ENCODE measurements at regions of chr17 and their contacts with region 1.

Region 1: DNA sequence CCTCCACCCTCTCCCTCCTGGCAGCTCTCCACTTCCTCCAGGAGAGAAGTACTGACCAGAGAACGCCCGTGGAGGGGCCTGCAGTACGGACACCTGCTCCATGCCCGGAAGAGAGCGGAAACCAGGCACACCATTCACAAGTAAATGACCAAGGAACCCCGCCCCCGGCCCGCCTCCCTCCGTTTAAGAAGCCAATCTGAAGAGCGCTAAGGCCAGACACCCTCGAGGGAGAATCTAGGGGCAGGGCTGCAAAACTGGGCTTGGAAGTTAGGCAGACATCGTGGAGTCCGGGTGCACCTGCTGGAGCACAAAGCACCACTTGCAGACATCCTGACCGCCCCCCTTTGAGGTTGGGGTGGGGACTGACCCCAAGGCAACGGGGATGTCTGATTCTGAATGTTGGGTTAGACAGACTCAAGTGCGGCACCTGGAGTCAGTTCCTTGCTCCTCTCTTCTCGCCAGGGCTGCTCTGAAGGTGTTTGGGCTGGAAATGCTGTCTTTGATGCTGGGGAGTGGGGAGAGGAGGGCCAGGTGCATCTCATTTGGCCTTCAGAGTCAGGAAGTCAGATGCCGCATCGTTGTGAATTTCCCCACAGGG is 964 bp upstream of the FAAP100 start:
- DNase-seq: peak; percentile 91
- ATAC-seq: peak; percentile 78
- H3K4me3 Mint-ChIP-seq: peak overlapping the region; percentile 89
- H3K27ac Mint-ChIP-seq: peak overlapping the region; percentile 86
- H3K4me1 Mint-ChIP-seq: peaks cover 38% of the 10 kb centered on the region
- H3K27me3 Mint-ChIP-seq: no peaks in the 10 kb centered on the region

Region 2: DNA sequence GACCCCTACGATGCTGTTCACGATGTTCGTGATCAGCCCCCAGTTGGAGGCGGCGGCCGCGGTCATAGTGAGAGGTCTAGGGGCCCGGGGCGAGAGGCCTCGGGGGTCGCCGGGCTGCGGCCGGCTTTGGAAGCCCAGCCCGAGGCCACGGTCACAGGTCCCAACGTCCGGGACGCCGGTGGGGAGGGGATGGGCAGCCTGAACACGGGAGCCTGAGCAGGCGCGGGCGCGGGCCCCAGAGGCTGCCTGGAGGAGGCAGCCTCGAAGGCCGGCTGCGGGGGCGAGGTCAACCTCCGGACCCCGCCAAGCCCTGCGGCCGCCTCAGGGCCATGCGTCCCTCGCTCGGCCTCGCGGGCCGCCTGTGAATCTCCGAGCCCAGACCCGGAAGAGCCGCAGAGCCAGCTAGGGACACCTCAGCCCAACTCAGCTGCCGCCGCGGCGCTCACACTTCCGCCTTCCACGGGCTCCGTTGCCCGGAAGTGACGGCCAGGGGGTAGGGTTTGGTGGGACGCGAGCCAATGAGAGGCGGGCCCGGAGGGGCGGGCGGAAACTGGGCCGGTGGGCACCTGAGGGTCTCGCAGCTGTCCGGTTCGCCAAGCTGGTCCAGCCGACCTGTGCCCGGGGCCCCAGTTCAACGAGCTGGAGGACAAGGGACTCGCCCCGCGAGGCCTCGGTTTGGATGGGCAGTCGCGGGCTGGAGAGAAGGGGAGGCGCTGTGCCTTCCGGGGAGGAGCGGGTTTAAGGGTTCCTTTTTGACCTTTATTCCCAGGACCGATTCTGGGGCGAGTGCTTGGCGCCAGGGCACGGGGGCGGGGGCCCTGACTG is 258.0 kb before region 1 on chr17 and contains the start of gene SLC38A10:
- CTCF ChIA-PET with region 1: no interaction called
- POLR2A ChIA-PET with region 1: no interaction called
- intact Hi-C with region 1: loop called (anchors 1 to 5 kb)
- DNase-seq: peak; percentile 95
- ATAC-seq: peak; percentile 91
- H3K4me3 Mint-ChIP-seq: peak within 1 kb of the TSS; percentile 89
- H3K27ac Mint-ChIP-seq: peak within 1 kb of the TSS; percentile 96
- H3K4me1 Mint-ChIP-seq: peaks cover 36% of the 10 kb centered on the region
- H3K27me3 Mint-ChIP-seq: no peaks in the 10 kb centered on the region
- total RNA-seq, gene SLC38A10: 47.6 to 52.9 TPM

Region 3: DNA sequence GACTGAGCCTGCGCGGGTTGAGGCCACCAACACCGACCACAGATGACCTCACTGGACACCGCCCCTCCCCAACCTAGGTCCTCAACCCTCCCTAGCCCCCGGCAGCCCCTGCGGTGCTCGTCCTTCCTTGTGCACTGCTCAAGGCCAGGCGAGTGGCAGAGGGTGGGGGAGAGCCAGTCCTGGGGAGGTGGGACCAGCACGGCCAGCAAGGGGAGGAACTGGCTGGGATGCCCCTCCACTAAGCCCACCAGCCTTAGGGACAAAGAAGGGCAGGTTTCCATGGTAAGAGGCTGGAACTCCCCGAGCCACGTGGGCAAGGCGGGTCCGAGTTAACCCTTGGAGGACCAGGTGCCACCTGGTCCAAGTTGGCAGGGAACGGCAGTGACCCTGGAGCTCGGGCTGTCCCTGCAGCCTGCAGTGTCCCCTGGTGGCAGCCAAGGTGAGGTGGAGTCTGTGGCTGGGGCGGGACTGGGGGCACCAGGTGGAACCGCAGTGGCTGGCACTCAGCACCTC is 15.7 kb before region 1 on chr17:
- CTCF ChIA-PET with region 1: no interaction called
- POLR2A ChIA-PET with region 1: no interaction called
- intact Hi-C with region 1: no loop called
- DNase-seq: peak; percentile 59
- ATAC-seq: peak; percentile 57
- H3K4me3 Mint-ChIP-seq: no peak overlapping the region
- H3K27ac Mint-ChIP-seq: no peak overlapping the region
- H3K4me1 Mint-ChIP-seq: no peaks in the 10 kb centered on the region
- H3K27me3 Mint-ChIP-seq: peaks cover 16% of the 10 kb centered on the region

Region 4: DNA sequence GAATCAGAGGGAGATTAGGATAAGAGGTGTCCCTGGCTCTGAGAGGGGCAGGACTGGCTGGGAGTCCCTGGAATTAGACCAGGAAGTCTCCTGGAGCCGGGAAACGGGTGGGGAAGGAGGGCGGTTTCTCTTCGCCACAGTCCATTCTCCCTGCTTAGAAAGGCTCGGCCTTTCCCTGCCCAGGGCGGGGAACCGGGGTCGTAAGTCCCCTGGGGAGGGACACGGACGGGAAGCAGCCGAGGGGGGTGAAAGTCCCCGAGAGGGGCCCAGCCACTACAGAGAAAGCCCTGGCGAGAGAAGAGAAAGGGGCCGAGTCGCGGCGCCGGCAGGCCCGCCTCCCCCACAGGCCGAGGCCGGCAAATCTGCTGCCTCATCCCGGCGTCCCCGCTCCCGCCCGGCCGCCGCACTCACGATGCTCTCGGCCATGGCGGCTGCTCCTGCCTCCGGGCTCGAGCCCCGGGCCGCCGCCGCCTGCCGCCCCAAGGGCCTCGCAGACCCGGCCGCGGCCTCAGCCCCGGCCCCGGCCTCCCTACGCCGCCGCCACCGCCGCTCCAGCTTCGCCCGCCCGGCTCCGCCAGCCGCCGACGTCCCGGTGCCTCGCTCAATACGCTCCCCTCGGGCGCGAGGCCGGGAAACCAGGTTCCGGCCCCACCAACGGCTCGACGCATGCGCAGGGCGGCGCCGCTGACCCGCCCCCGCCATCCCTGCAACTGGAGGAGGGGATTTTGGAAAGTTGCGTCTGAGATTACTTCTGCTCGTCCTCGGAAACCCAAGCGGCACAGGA is 83.6 kb after region 1 on chr17 and contains the starts of genes NPLOC4 and TSPAN10:
- CTCF ChIA-PET with region 1: no interaction called
- POLR2A ChIA-PET with region 1: interaction called, 4 read pairs
- intact Hi-C with region 1: loop called in 1 of 2 experiments (anchors 1 kb)
- DNase-seq: peak; percentile 91
- ATAC-seq: peak; percentile 89
- H3K4me3 Mint-ChIP-seq: peak within 1 kb of the TSS; percentile 96
- H3K27ac Mint-ChIP-seq: peak within 1 kb of the TSS; percentile 84
- H3K4me1 Mint-ChIP-seq: peaks cover 23% of the 10 kb centered on the region
- H3K27me3 Mint-ChIP-seq: no peaks in the 10 kb centered on the region
- total RNA-seq, gene NPLOC4: 71.8 to 93.1 TPM
- total RNA-seq, gene TSPAN10: 0.34 to 0.35 TPM

Region 5: GRCh38 chr17:81683584-81684237 is 130.6 kb after region 1 on chr17 and contains the starts of genes ARL16 and HGS:
- CTCF ChIA-PET with region 1: no interaction called
- POLR2A ChIA-PET with region 1: no interaction called
- intact Hi-C with region 1: loop called in 1 of 2 experiments (anchors 1 kb)
- DNase-seq: peak; percentile 98
- ATAC-seq: peak; percentile 98
- H3K4me3 Mint-ChIP-seq: peak within 1 kb of the TSS; percentile 87
- H3K27ac Mint-ChIP-seq: peak within 1 kb of the TSS; percentile 83
- H3K4me1 Mint-ChIP-seq: peaks cover 30% of the 10 kb centered on the region
- H3K27me3 Mint-ChIP-seq: no peaks in the 10 kb centered on the region
- total RNA-seq, gene ARL16: 39.0 to 39.1 TPM
- total RNA-seq, gene HGS: 100 to 102 TPM

Region 6: DNA sequence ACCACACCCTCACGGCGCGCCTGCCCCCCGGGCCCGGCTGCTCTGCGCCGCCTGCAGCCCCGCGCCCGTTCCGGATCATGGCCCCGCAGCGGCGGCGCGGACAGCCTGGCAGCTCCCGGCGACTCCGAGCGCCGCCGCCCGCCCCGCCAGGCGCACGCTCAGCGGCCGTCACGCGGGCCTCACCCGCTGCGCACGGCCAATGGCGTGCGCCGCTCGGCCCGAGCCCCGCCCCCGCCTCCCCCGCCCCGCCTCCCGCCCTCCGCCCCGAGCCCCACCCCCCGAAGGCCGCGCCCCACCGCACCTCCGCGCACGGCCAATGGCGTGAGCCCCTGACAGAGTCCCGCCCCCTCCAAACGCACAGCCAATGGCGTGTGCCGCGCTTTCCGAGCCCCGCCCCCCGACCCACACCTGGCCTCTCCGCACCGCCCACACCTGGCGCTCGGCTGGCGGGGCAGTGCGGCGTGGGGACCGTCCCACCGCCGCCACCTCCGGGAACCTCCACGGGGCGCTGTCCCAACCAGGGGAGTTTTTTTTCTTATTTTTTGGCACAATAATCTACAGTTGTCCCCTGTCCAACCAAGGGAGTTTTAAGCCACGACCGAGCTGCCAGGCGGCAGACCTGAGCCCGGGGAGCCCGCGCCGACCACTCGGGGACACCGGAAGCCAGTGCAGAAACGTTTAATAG is 358.3 kb after region 1 on chr17 and contains the start of gene PCYT2:
- CTCF ChIA-PET with region 1: no interaction called
- POLR2A ChIA-PET with region 1: interaction called, 6 read pairs
- intact Hi-C with region 1: loop called in 1 of 2 experiments (anchors 5 kb)
- DNase-seq: peak; percentile 97
- ATAC-seq: peak; percentile 96
- H3K4me3 Mint-ChIP-seq: peak within 1 kb of the TSS; percentile 79
- H3K27ac Mint-ChIP-seq: no peak within 1 kb of the TSS
- H3K4me1 Mint-ChIP-seq: peaks cover 14% of the 10 kb centered on the region
- H3K27me3 Mint-ChIP-seq: no peaks in the 10 kb centered on the region
- total RNA-seq, gene PCYT2: 19.7 to 24.0 TPM

Measured in activated CD4-positive, alpha-beta T cell treated with anti-CD3 and anti-CD28 coated beads for 36 hours (primary cell).